ENCODE measurements at regions of chr1 and their contacts with region 1.

Region 1: GRCh38 chr1:46724991-46725735 is 6.2 kb upstream of the EFCAB14 start:
- H3K4me3 ChIP-seq: no peak overlapping the region
- H3K27ac ChIP-seq: no peak overlapping the region
- H3K4me1 ChIP-seq: no peaks in the 10 kb centered on the region
- CTCF ChIP-seq: peak; percentile 89

Region 2: DNA sequence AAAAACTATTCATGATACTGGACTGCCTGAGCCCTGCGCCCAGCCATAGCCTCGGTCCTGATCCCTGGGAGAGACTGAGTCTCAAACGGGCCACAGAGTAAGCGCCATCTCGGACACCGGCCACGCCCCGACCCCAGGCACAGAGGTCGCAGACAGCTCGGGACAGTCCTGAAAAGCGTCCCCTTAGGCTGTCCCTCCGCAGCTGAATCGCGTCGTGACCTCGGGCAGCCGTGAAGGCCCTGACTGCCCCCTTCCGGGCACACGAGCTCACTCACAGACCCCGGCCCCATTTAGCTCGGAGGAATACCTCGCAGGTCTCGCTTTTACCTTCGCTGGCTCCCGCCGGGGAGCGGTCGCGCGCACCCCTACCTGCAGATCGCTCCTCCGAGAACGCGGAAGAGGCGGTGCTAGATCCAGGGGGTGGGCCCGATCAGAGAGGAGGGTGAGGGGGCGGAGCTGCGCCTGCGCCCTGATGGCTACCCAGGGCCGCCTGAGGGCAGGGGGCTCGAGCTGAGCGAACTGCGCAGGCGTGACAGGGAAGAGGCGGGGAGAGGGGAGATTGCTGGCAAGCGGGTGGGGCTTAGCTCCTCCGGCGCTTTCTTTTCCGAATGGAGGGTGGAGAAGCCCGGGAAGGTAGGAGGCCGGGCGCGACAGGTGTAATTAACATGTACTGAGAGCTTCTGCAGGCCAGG is 121.2 kb before region 1 on chr1 and contains the start of gene MKNK1:
- CTCF ChIA-PET with region 1: interaction called, 10 read pairs
- POLR2A ChIA-PET with region 1: interaction called, 3 read pairs
- H3K4me3 ChIP-seq: peak within 1 kb of the TSS; percentile 95
- H3K27ac ChIP-seq: no peak within 1 kb of the TSS
- H3K4me1 ChIP-seq: peaks cover 2% of the 10 kb centered on the region; the same call in 1 of the 2 replicates
- CTCF ChIP-seq: peak; percentile 47; the same call in 1 of the 2 replicates

Region 3: GRCh38 chr1:46622344-46622743 is 102.8 kb before region 1 on chr1:
- CTCF ChIA-PET with region 1: interaction called, 20 read pairs
- POLR2A ChIA-PET with region 1: no interaction called
- H3K4me3 ChIP-seq: no peak overlapping the region
- H3K27ac ChIP-seq: no peak overlapping the region
- H3K4me1 ChIP-seq: 0 out of 2 replicates have a peak, but pooled peaks cover 3% of the 10 kb centered on the region
- CTCF ChIP-seq: peak; percentile 74

Region 4: DNA sequence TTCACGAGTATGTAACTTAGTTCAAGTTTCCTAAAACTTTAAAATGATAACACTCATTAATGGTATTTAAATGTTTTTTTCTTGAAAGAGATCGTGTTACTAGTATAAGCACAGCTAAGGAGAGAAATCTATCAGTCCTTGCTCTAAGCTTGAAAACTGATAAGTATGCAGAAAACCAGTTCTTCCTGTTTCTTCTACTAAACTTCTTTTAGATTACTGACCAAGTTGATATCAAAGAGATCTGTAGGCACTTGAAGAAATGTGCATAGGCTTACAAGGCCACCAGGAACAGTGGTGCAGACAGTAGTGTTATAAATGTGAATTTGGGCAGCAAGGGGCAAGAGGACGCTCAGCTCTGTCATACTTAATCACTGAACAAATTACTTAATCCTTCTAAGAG is 10.2 kb before region 1 on chr1:
- CTCF ChIA-PET with region 1: interaction called, 20 read pairs
- POLR2A ChIA-PET with region 1: no interaction called
- H3K4me3 ChIP-seq: no peak overlapping the region
- H3K27ac ChIP-seq: no peak overlapping the region
- H3K4me1 ChIP-seq: peaks cover 3% of the 10 kb centered on the region; the same call in 1 of the 2 replicates
- CTCF ChIP-seq: no peak

Measured in HEK293 (cell line).